ENCODE measurements at regions of chr12 and their contacts with region 1.

Region 1: GRCh38 chr12:67068761-67069450 is 200.3 kb upstream of the CAND1 start:
- DNase-seq: peak in 8 of 9 donors; percentile 29 to 54 (median 42)
- ATAC-seq: peak; percentile 79
- H3K4me3 ChIP-seq: no peak overlapping the region
- H3K4me3 Mint-ChIP-seq: peak overlapping the region; percentile 85 to 96 (median 92)
- H3K27ac ChIP-seq: no peak overlapping the region
- H3K27ac Mint-ChIP-seq: peak overlapping the region in 6 of 9 donors; percentile 31 to 82 (median 79)
- H3K4me1 ChIP-seq: peaks cover 0 to 5% of the 10 kb centered on the region in 2 donors
- H3K4me1 Mint-ChIP-seq: peaks cover 9 to 27% (median 19%) of the 10 kb centered on the region in 7 donors
- H3K27me3 ChIP-seq: no peaks in the 10 kb centered on the region
- H3K27me3 Mint-ChIP-seq: peaks cover 0 to 64% (median 35%) of the 10 kb centered on the region in 5 donors

Region 2: DNA sequence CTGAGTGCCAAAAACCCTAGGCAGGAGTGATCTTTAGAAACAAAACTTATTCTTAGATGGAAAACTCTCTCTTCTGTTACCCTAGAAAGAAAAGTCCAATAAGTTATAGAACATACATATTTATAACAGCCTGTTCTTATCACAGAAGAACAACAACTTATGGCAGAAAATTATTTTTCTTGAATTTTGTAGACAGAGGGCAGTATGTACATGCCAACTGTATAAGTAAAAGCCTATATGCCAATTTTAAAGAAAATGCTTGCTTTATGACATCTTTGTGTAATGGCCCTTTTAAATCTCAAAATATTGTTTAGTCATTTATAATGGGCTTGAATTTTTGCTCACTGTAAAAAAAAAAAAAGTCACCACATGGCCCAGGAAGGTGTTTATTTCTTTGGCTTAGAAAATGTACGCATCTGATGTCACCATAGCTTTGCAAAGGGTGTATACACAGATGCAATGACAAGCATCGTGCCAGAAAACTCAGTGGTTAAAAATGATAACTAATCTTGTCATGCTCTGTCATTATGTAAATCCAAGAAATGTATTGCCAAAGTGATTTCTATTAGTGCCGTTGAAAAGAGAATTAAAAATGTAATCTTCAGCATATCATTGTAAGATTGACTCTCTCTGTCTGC is 351.8 kb before region 1 on chr12:
- CTCF ChIA-PET with region 1: no interaction called
- POLR2A ChIA-PET with region 1: no interaction called
- intact Hi-C with region 1: loop called in 1 of 2 experiments (anchors 10 kb)
- DNase-seq: no peak
- ATAC-seq: no peak
- H3K4me3 ChIP-seq: no peak overlapping the region
- H3K4me3 Mint-ChIP-seq: no peak overlapping the region
- H3K27ac ChIP-seq: no peak overlapping the region
- H3K27ac Mint-ChIP-seq: peak overlapping the region in 1 of 9 donors; percentile 97
- H3K4me1 ChIP-seq: peaks cover 0 to 18% of the 10 kb centered on the region in 2 donors
- H3K4me1 Mint-ChIP-seq: peaks cover 8 to 40% (median 25%) of the 10 kb centered on the region in 7 donors
- H3K27me3 ChIP-seq: no peaks in the 10 kb centered on the region
- H3K27me3 Mint-ChIP-seq: peaks cover 0 to 19% (median 0%) of the 10 kb centered on the region in 5 donors